ENCODE measurements at regions of chr3 and their contacts with region 1.

Region 1: GRCh38 chr3:153161138-153161713 is 800 bp upstream of the RAP2B start:
- DNase-seq: peak; percentile 98
- H3K27ac ChIP-seq: peak overlapping the region; percentile 100
- CTCF ChIP-seq: no peak

Region 2: GRCh38 chr3:153043729-153044328 is 117.4 kb before region 1 on chr3:
- CTCF ChIA-PET with region 1: interaction called, 15 read pairs
- POLR2A ChIA-PET with region 1: interaction called, 10 read pairs
- DNase-seq: peak; percentile 38
- H3K27ac ChIP-seq: peak overlapping the region; percentile 91
- CTCF ChIP-seq: no peak

Region 3: GRCh38 chr3:153052096-153052460 is 109.1 kb before region 1 on chr3:
- CTCF ChIA-PET with region 1: interaction called, 3 read pairs
- POLR2A ChIA-PET with region 1: interaction called, 12 read pairs
- DNase-seq: peak; percentile 82
- H3K27ac ChIP-seq: peak overlapping the region; percentile 83
- CTCF ChIP-seq: no peak

Measured in RWPE1 (cell line).